H1 (cell line): ENCODE measurements at regions of chr13 and their contacts with region 1.

Region 1: DNA sequence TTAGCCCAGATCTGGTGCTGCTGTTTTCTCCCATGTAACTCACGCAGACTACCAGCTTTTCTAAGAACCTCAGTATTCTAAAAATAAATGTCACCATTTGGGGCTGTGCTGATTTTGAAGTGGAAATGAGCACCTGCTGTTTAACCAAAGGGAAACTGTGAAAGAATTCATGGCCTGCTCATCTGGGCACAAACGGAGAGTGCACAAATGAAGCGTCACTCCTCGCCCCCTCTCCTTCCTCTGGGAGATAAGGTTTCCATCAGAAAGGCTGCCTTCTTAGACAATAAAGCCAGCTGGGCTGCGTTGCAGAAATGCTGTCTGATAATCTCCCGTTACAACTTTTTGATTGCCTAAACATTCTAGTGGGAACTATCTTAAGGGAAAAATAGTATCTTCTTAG is 73.7 kb upstream of the SLC15A1 start:
- DNase-seq: no peak
- H3K4me3 ChIP-seq: no peak overlapping the region
- H3K27ac ChIP-seq: no peak overlapping the region
- H3K4me1 ChIP-seq: peaks cover 0 to 21% (median 9%) of the 10 kb centered on the region in 4 experiments; a peak in 5 of 7 replicates
- H3K27me3 ChIP-seq: no peaks in the 10 kb centered on the region; a peak in 2 of 7 replicates
- CTCF ChIP-seq: no peak
- EP300 ChIP-seq: no peak
- POLR2A ChIP-seq: no peak
- RAD21 ChIP-seq: no peak

Region 2: DNA sequence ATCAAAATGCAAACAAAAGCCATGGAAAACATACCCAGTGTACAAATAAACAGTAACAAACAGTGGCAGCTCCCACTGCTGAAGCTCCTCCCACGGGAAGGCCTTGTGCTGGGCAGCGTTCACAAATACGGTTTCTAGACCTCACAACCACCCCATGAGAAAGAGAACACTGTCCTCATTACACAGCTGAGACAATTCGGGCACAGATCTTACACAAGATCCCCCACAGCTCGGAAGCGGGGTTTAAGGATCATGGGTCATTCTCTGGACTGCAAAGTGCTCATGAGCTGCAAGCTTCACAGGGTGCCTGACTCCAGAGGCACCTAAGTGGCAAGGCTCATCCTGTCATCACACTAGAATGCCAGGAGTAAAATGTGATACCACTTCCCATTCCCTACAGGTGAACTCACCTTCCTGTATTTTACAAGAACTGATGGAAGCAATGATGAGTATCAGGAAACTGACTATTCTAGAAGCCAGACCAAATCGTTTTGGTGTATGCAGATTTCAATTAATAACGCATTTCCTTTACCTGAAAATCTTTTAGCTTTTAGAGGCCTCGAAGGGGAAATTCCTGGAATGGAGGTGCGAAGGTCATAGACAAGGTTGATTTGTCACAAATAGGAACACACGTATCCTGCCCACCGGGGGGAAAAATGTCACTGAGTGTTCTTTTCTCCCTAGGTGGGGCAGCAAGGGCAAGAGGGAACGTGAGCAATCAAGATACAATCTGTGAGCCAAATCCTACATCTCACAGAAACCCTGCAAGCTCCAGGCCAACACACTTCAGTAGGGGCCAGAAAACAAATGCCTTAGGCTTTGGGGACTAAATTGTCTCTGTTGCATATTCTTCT is 290.4 kb before region 1 on chr13:
- CTCF ChIA-PET with region 1: no interaction called
- POLR2A ChIA-PET with region 1: no interaction called
- DNase-seq: no peak
- H3K4me3 ChIP-seq: no peak overlapping the region
- H3K27ac ChIP-seq: no peak overlapping the region
- H3K4me1 ChIP-seq: peaks cover 1 to 8% (median 2%) of the 10 kb centered on the region in 4 experiments; a peak in 6 of 7 replicates
- H3K27me3 ChIP-seq: no peaks in the 10 kb centered on the region
- CTCF ChIP-seq: no peak
- EP300 ChIP-seq: no peak
- POLR2A ChIP-seq: no peak
- RAD21 ChIP-seq: no peak

Region 3: GRCh38 chr13:98794498-98794897 is 31.6 kb before region 1 on chr13:
- CTCF ChIA-PET with region 1: interaction called, 10 read pairs
- POLR2A ChIA-PET with region 1: no interaction called
- DNase-seq: peak in 1 of 2 experiments; percentile 45
- H3K4me3 ChIP-seq: no peak overlapping the region
- H3K27ac ChIP-seq: no peak overlapping the region
- H3K4me1 ChIP-seq: no peaks in the 10 kb centered on the region
- H3K27me3 ChIP-seq: no peaks in the 10 kb centered on the region
- CTCF ChIP-seq: peak; percentile 25 to 51 (median 41); a peak in 3 of 4 replicates
- EP300 ChIP-seq: no peak
- POLR2A ChIP-seq: no peak
- RAD21 ChIP-seq: peak; percentile 15 to 39; a peak in 2 of 4 replicates

Region 4: DNA sequence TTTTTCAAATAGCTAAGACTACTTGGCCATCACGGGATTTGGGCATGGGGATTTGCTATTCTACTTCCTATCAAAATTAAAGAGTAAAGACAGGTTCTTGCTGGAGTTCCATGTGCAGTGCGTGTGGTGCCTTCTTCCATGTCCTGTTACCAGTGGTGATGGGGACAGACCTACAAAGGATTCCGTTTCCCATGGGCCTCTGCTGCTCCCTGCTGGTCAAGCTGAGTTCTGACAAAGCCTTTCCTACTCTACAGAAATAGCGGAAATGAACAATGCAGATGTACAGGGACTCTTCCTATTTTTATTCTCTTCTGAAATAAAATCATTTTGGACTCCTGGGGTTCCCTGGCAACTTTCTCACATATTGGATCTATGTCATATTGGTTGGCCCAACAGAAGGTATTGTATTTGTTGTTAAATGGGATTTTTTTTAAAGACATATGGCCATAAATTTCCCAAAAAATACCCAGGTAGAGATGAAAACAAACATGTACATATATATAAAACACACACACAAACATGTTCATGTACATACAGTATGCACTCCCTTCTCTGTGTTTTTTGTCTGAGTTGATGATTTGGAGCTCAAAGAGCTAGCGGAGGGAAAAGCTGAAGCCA is 16.8 kb after region 1 on chr13:
- CTCF ChIA-PET with region 1: interaction called, 59 read pairs
- POLR2A ChIA-PET with region 1: interaction called, 3 read pairs
- DNase-seq: peak in 1 of 2 experiments; percentile 87
- H3K4me3 ChIP-seq: no peak overlapping the region
- H3K27ac ChIP-seq: no peak overlapping the region
- H3K4me1 ChIP-seq: peaks cover 0 to 2% (median under 1%) of the 10 kb centered on the region in 4 experiments; a peak in 3 of 7 replicates
- H3K27me3 ChIP-seq: no peaks in the 10 kb centered on the region
- CTCF ChIP-seq: peak; percentile 73 to 89 (median 81)
- EP300 ChIP-seq: no peak
- POLR2A ChIP-seq: no peak
- RAD21 ChIP-seq: peak; percentile 91 to 93

Region 5: GRCh38 chr13:98981369-98982080 is 155.4 kb after region 1 on chr13:
- CTCF ChIA-PET with region 1: no interaction called
- POLR2A ChIA-PET with region 1: no interaction called
- DNase-seq: no peak
- H3K4me3 ChIP-seq: no peak overlapping the region
- H3K27ac ChIP-seq: no peak overlapping the region
- H3K4me1 ChIP-seq: peaks cover 4 to 14% (median 12%) of the 10 kb centered on the region in 4 experiments
- H3K27me3 ChIP-seq: no peaks in the 10 kb centered on the region
- CTCF ChIP-seq: no peak
- EP300 ChIP-seq: no peak
- POLR2A ChIP-seq: no peak
- RAD21 ChIP-seq: no peak

Region 6: DNA sequence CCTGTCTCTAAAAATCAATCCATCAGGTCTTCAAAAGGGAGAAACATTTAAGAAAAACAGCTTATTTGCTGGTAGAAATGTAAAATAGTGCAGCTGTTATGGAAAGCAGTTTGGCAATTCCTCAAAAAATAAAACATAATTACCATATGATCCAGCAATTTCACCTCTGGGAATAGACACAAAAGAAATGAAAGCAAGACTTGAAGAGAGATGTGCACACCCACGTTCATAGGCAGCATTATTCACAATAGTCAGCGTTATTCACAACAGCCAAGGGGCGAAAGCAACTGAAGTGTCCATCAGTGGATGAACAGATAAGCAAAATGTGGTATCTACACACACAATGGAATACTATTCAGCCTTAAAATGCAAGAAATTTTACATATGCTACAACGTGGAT is 196.8 kb after region 1 on chr13:
- CTCF ChIA-PET with region 1: no interaction called
- POLR2A ChIA-PET with region 1: no interaction called
- DNase-seq: no peak
- H3K4me3 ChIP-seq: no peak overlapping the region
- H3K27ac ChIP-seq: no peak overlapping the region
- H3K4me1 ChIP-seq: no peaks in the 10 kb centered on the region
- H3K27me3 ChIP-seq: no peaks in the 10 kb centered on the region
- CTCF ChIP-seq: no peak
- EP300 ChIP-seq: no peak
- POLR2A ChIP-seq: no peak
- RAD21 ChIP-seq: no peak

Region 7: DNA sequence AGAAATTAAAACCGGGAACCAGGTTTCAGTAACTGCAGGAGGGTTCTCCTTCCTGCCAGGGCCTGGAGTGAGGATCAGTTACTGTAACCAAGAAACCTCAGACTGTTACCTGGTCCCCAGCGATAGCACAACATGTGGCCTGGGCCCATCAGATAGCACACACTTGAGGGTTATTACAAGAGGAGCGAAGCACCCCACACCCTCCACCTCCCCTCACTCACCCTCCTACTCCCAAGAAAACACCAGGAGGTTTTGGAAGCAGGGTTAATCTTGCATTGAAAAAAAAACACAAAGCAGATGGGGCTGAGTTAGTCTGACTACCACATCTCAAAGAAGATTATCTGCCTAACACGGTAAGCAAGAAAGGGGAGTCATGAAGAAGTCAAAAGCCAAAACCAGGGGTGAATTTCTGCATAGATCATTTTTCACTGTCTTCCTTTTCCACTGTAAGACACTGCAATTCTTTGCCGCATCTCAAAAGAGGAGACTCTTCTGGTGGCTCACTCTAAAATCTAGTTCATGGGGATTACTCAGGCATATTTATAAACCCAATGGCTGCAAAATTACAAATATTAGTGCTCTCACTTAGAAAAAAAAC is 227.6 kb after region 1 on chr13:
- CTCF ChIA-PET with region 1: no interaction called
- POLR2A ChIA-PET with region 1: no interaction called
- DNase-seq: no peak
- H3K4me3 ChIP-seq: no peak overlapping the region
- H3K27ac ChIP-seq: no peak overlapping the region
- H3K4me1 ChIP-seq: peaks cover 0 to 4% (median 2%) of the 10 kb centered on the region in 4 experiments; a peak in 3 of 7 replicates
- H3K27me3 ChIP-seq: no peaks in the 10 kb centered on the region
- CTCF ChIP-seq: no peak
- EP300 ChIP-seq: no peak
- POLR2A ChIP-seq: no peak
- RAD21 ChIP-seq: no peak